ENCODE measurements at regions of chr15 and their contacts with region 1.

Region 1: GRCh38 chr15:98518823-98519561 is 129.3 kb upstream of the IGF1R start:
- H3K4me3 ChIP-seq: no peak overlapping the region
- H3K27ac ChIP-seq: no peak overlapping the region
- H3K4me1 ChIP-seq: no peaks in the 10 kb centered on the region; the same call in 1 of the 2 replicates
- CTCF ChIP-seq: peak; percentile 83

Region 2: DNA sequence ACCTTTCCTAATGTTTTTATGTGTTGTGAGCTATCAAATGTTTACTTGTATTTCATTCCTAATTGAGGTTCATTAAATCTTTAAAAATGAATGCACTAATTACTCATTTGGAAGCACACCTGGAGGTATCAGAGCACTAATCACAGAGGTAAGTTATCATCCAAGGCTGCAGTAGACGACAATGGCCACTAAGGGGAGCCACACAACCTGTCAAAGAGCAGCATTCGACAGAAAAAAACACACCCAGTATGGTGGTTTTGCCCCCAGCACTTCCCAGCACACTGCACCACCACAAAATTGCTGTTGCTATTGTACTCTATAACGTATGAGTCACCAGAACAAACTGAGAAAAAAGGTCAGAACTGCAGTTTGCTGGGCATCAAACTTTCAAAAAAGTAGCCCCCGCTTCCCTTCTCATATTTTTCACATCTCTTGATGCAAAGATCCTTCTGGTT is 76.6 kb before region 1 on chr15:
- CTCF ChIA-PET with region 1: interaction called, 13 read pairs
- POLR2A ChIA-PET with region 1: interaction called, 5 read pairs
- H3K4me3 ChIP-seq: no peak overlapping the region
- H3K27ac ChIP-seq: no peak overlapping the region
- H3K4me1 ChIP-seq: peaks cover 7% of the 10 kb centered on the region
- CTCF ChIP-seq: peak; percentile 72

Region 3: DNA sequence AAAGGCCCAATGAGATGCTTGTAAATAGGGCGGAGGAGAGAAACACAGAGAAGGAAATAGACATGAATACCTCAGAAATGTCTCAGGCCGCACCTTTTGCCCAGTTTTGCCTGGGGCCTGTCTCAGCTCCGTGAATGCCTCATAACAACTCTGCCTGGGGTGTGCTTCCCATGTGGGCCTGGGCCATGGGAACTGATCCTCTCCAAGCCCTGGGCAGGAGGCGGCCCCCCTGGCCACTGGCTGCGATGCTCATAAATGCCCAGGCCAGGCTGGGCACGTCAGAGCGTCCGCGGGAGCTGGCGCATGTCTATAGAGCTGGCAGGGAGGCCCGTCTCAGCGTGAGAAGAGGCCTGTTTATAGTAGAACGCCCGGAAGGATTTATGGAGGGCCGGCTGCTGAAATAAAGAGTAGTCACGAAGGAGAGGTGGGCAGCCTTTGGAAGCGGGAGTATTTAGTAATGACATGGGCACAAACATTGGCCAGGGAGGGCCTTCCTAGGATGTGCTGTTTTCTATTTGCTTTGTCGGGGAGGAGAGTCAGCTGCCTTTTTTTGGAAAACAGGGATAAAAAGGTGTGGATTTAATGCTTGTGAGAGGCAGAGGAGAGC is 43.4 kb after region 1 on chr15:
- CTCF ChIA-PET with region 1: interaction called, 12 read pairs
- POLR2A ChIA-PET with region 1: no interaction called
- H3K4me3 ChIP-seq: no peak overlapping the region
- H3K27ac ChIP-seq: no peak overlapping the region
- H3K4me1 ChIP-seq: no peaks in the 10 kb centered on the region
- CTCF ChIP-seq: no peak

Region 4: GRCh38 chr15:98658831-98659699 is 140.1 kb after region 1 on chr15:
- CTCF ChIA-PET with region 1: interaction called, 142 read pairs
- POLR2A ChIA-PET with region 1: interaction called, 3 read pairs
- H3K4me3 ChIP-seq: no peak overlapping the region
- H3K27ac ChIP-seq: no peak overlapping the region
- H3K4me1 ChIP-seq: peaks cover 24% of the 10 kb centered on the region
- CTCF ChIP-seq: peak; percentile 42; the same call in 1 of the 2 replicates

Region 5: GRCh38 chr15:98830034-98830634 is 311.1 kb after region 1 on chr15:
- CTCF ChIA-PET with region 1: no interaction called
- POLR2A ChIA-PET with region 1: no interaction called
- H3K4me3 ChIP-seq: no peak overlapping the region
- H3K27ac ChIP-seq: no peak overlapping the region
- H3K4me1 ChIP-seq: peaks cover 11% of the 10 kb centered on the region; the same call in 1 of the 2 replicates
- CTCF ChIP-seq: no peak

Region 6: GRCh38 chr15:98873441-98874201 is 354.6 kb after region 1 on chr15:
- CTCF ChIA-PET with region 1: interaction called, 10 read pairs
- POLR2A ChIA-PET with region 1: no interaction called
- H3K4me3 ChIP-seq: peak overlapping the region; percentile 1
- H3K27ac ChIP-seq: peak overlapping the region; percentile 18; the same call in 1 of the 2 replicates
- H3K4me1 ChIP-seq: peaks cover 32% of the 10 kb centered on the region
- CTCF ChIP-seq: no peak

Region 7: DNA sequence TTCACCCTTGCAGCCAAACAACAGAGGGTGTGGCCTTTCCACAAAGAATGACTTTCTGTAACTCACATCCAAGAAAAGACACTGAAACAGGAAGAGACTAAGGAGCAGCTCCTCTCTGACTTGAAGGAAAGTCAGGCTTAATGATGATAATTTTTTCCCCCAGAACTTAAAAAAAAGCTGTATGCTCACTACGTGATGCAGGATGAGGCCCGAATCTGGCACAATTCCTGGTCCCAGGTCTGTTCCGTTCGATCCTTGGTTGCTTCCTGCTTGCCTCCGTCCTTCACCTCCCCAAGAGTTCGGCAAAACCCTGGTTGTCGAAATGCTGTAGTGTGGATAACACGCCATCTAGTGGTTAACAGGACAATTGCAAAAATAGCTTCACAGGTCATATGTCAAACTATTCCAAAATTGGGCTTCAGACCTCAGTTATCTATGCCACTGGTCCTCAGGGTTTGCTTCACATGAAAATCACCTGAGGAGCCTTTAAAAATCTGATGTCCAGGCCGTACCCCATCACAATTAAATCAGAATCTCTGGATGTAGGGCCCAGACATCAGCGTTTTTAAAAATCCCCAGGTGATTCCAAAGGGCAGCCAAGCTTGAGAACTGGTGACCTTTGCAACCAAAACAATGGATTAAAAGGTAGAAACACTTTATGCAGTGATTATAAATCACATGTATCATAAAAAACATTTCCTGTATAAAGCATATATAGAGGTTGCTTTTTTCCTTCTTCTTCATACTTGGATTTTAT is 557.7 kb after region 1 on chr15:
- CTCF ChIA-PET with region 1: interaction called, 27 read pairs
- POLR2A ChIA-PET with region 1: no interaction called
- H3K4me3 ChIP-seq: peak overlapping the region; percentile 1; the same call in 1 of the 2 replicates
- H3K27ac ChIP-seq: no peak overlapping the region
- H3K4me1 ChIP-seq: no peaks in the 10 kb centered on the region
- CTCF ChIP-seq: peak; percentile 70; the same call in 1 of the 2 replicates

Measured in HEK293 (cell line).